B cell (primary cell): ENCODE measurements at regions of chr13 and their contacts with region 1.

Region 1: DNA sequence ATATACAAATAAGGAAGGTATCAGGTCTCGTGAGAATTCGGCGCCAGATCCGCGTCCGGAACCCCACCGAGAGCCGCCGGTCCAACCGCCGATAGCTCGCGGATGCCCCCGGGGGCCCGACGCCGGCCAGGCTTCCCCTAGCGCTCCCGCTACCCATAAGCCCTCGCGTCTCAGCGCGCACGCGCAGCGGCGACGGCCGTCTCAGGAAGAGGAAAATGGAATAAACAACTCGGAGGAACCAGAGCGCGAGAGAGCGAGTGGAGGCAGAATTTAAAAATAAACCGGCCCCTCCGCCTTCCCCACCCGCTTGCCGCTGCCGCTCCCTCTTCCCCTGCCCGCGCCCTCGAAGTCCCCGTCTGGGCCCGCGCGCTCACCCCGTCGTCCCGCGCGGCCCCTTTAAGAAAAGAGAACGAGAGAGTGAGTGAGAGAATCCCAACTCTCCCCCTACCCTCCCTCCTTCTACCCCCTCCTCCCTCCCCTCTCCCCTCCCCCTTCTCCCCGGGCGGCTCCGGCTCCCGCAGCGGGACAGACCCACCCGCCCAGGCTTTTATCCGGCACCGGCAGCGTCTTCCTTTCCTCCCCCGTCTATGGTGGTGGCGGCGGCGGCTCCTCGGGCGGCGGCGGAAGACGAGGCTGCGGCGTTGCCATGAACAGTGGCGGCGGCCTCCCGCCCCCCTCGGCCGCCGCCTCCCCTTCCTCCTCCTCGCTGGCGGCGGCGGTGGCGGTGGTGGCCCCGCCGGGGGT is at the start of gene PAN3:
- DNase-seq: peak; percentile 96
- ATAC-seq: peak; percentile 65
- H3K4me3 ChIP-seq: peak within 1 kb of the TSS; percentile 80 to 97 (median 93)
- H3K4me3 Mint-ChIP-seq: peak within 1 kb of the TSS; percentile 87
- H3K27ac ChIP-seq: peak within 1 kb of the TSS; percentile 92 to 95
- H3K27ac Mint-ChIP-seq: peak within 1 kb of the TSS; percentile 99
- H3K4me1 ChIP-seq: peaks cover 37 to 43% of the 10 kb centered on the region in 2 donors
- H3K4me1 Mint-ChIP-seq: peaks cover 50% of the 10 kb centered on the region
- H3K27me3 ChIP-seq: no peaks in the 10 kb centered on the region
- H3K27me3 Mint-ChIP-seq: no peaks in the 10 kb centered on the region
- CTCF ChIP-seq: no peak
- total RNA-seq, gene PAN3: 117 and 119 TPM in 2 replicates

Region 2: GRCh38 chr13:27147530-27148170 is 990.5 kb before region 1 on chr13:
- CTCF ChIA-PET with region 1: no interaction called
- POLR2A ChIA-PET with region 1: no interaction called
- intact Hi-C with region 1: loop called (anchors 5 kb)
- DNase-seq: peak; percentile 74
- ATAC-seq: peak; percentile 90
- H3K4me3 ChIP-seq: no peak overlapping the region
- H3K4me3 Mint-ChIP-seq: peak overlapping the region; percentile 67
- H3K27ac ChIP-seq: peak overlapping the region; percentile 70 to 72
- H3K27ac Mint-ChIP-seq: peak overlapping the region; percentile 94
- H3K4me1 ChIP-seq: peaks cover 36 to 51% of the 10 kb centered on the region in 2 donors
- H3K4me1 Mint-ChIP-seq: peaks cover 74% of the 10 kb centered on the region
- H3K27me3 ChIP-seq: no peaks in the 10 kb centered on the region
- H3K27me3 Mint-ChIP-seq: no peaks in the 10 kb centered on the region
- CTCF ChIP-seq: no peak

Region 3: GRCh38 chr13:27620377-27621115 is 517.6 kb before region 1 on chr13 and contains the start of gene LNX2:
- CTCF ChIA-PET with region 1: no interaction called
- POLR2A ChIA-PET with region 1: no interaction called
- intact Hi-C with region 1: loop called (anchors 1 kb)
- DNase-seq: peak; percentile 96
- ATAC-seq: peak; percentile 83
- H3K4me3 ChIP-seq: peak within 1 kb of the TSS; percentile 77 to 92 (median 90)
- H3K4me3 Mint-ChIP-seq: peak within 1 kb of the TSS; percentile 93
- H3K27ac ChIP-seq: peak within 1 kb of the TSS; percentile 98
- H3K27ac Mint-ChIP-seq: peak within 1 kb of the TSS; percentile 92
- H3K4me1 ChIP-seq: peaks cover 27 to 28% of the 10 kb centered on the region in 2 donors
- H3K4me1 Mint-ChIP-seq: peaks cover 62% of the 10 kb centered on the region
- H3K27me3 ChIP-seq: no peaks in the 10 kb centered on the region
- H3K27me3 Mint-ChIP-seq: no peaks in the 10 kb centered on the region
- CTCF ChIP-seq: no peak
- total RNA-seq, gene LNX2: 10.0 and 10.9 TPM in 2 replicates

Region 4: DNA sequence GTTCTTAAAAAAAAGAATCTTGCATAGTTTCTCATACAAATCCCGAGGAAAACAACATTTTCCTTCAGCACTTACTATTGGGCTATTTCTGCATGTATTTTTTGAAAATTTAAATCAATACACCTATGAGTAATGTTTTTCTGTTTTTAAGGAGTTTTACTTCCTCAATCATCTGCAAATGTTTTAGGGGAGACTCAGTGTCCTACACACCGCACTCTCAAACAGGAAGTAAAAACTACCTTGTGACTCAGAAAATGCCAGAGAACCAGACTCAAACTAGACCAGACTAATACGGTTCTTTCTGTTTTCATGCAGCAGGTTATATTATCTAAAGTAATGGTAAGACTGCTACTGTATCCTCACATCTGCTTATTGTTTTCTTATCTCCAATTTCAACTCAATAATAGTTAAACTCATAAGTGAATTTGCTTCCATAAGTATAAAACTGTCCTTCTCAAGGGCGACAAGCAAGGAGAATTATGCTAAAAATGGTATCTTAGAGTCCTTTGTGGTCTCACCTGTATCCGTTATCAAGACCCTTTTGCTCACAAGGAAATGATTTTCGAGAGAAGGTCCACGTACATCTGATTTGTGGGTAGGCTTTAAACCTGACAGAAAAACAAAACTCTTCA is 90.3 kb before region 1 on chr13:
- CTCF ChIA-PET with region 1: interaction called, 4 read pairs
- POLR2A ChIA-PET with region 1: interaction called, 4 read pairs
- intact Hi-C with region 1: loop called (anchors 1 kb)
- DNase-seq: peak; percentile 84
- ATAC-seq: peak; percentile 92
- H3K4me3 ChIP-seq: peak overlapping the region in 3 of 5 experiments; percentile 22 to 33 (median 23)
- H3K4me3 Mint-ChIP-seq: peak overlapping the region; percentile 76
- H3K27ac ChIP-seq: peak overlapping the region; percentile 89 to 97
- H3K27ac Mint-ChIP-seq: peak overlapping the region; percentile 95
- H3K4me1 ChIP-seq: peaks cover 57 to 67% of the 10 kb centered on the region in 2 donors
- H3K4me1 Mint-ChIP-seq: peaks cover 56% of the 10 kb centered on the region
- H3K27me3 ChIP-seq: no peaks in the 10 kb centered on the region
- H3K27me3 Mint-ChIP-seq: no peaks in the 10 kb centered on the region
- CTCF ChIP-seq: no peak

Region 5: GRCh38 chr13:28251466-28251865 is 113.3 kb after region 1 on chr13:
- CTCF ChIA-PET with region 1: no interaction called
- POLR2A ChIA-PET with region 1: no interaction called
- intact Hi-C with region 1: loop called (anchors 5 kb)
- DNase-seq: no peak
- ATAC-seq: no peak
- H3K4me3 ChIP-seq: no peak overlapping the region
- H3K4me3 Mint-ChIP-seq: peak overlapping the region; percentile 47
- H3K27ac ChIP-seq: peak overlapping the region in 1 of 2 donors; percentile 87
- H3K27ac Mint-ChIP-seq: peak overlapping the region; percentile 70
- H3K4me1 ChIP-seq: peaks cover 49 to 63% of the 10 kb centered on the region in 2 donors
- H3K4me1 Mint-ChIP-seq: peaks cover 69% of the 10 kb centered on the region
- H3K27me3 ChIP-seq: no peaks in the 10 kb centered on the region
- H3K27me3 Mint-ChIP-seq: no peaks in the 10 kb centered on the region
- CTCF ChIP-seq: no peak

Region 6: DNA sequence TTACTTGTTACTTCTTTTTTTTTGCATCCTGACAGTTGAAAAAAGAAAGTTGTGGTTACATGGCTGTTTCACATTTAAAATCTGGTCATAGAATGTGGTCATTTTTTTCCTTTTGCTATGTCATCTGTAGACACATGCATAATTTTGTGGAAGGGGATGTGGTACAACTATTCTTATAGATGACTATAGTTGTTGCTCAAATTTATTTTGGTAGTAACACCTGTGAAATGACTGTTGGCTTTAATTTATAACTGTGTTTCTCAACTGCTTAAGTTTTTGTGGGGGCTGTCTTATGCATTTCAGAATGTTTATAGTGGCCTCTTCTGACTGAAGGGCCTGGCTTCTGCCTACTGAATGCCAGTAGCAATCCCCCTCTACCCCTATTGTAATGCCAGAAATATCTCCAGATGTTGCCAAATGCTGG is 130.6 kb after region 1 on chr13:
- CTCF ChIA-PET with region 1: no interaction called
- POLR2A ChIA-PET with region 1: no interaction called
- intact Hi-C with region 1: loop called (anchors 2 kb)
- DNase-seq: peak; percentile 77
- ATAC-seq: peak; percentile 80
- H3K4me3 ChIP-seq: no peak overlapping the region
- H3K4me3 Mint-ChIP-seq: peak overlapping the region; percentile 58
- H3K27ac ChIP-seq: peak overlapping the region; percentile 57 to 64
- H3K27ac Mint-ChIP-seq: peak overlapping the region; percentile 79
- H3K4me1 ChIP-seq: peaks cover 9 to 19% of the 10 kb centered on the region in 2 donors
- H3K4me1 Mint-ChIP-seq: peaks cover 26% of the 10 kb centered on the region
- H3K27me3 ChIP-seq: no peaks in the 10 kb centered on the region
- H3K27me3 Mint-ChIP-seq: no peaks in the 10 kb centered on the region
- CTCF ChIP-seq: no peak